IMR-90 (cell line): ENCODE measurements at regions of chr15 and their contacts with region 1.

Region 1: GRCh38 chr15:25372298-25372697 is 66.5 kb downstream of the UBE3A start:
- DNase-seq: peak; percentile 76
- ATAC-seq: peak; percentile 87
- H3K4me3 ChIP-seq: no peak overlapping the region
- H3K27ac ChIP-seq: no peak overlapping the region
- H3K4me1 ChIP-seq: peaks cover 2% of the 10 kb centered on the region
- H3K27me3 ChIP-seq: no peaks in the 10 kb centered on the region
- CTCF ChIP-seq: no peak
- POLR2A ChIP-seq: no peak
- RAD21 ChIP-seq: no peak

Region 2: GRCh38 chr15:25333049-25333448 is 39.2 kb before region 1 on chr15:
- CTCF ChIA-PET with region 1: no interaction called
- POLR2A ChIA-PET with region 1: no interaction called
- dilution Hi-C with region 1: no loop called
- in situ Hi-C with region 1: no loop called
- intact Hi-C with region 1: no loop called
- DNase-seq: no peak
- ATAC-seq: no peak
- H3K4me3 ChIP-seq: no peak overlapping the region
- H3K27ac ChIP-seq: no peak overlapping the region
- H3K4me1 ChIP-seq: no peaks in the 10 kb centered on the region
- H3K27me3 ChIP-seq: no peaks in the 10 kb centered on the region
- CTCF ChIP-seq: no peak
- POLR2A ChIP-seq: no peak
- RAD21 ChIP-seq: no peak

Region 3: GRCh38 chr15:25408428-25408827 is 36.1 kb after region 1 on chr15:
- CTCF ChIA-PET with region 1: interaction called, 4 read pairs
- POLR2A ChIA-PET with region 1: no interaction called
- dilution Hi-C with region 1: no loop called
- in situ Hi-C with region 1: no loop called
- intact Hi-C with region 1: loop called (anchors 5 kb)
- DNase-seq: peak; percentile 31
- ATAC-seq: peak; percentile 27; the same call in 1 of the 2 replicates
- H3K4me3 ChIP-seq: no peak overlapping the region
- H3K27ac ChIP-seq: no peak overlapping the region
- H3K4me1 ChIP-seq: peaks cover 11% of the 10 kb centered on the region
- H3K27me3 ChIP-seq: no peaks in the 10 kb centered on the region
- CTCF ChIP-seq: no peak
- POLR2A ChIP-seq: no peak
- RAD21 ChIP-seq: no peak